BJ (cell line): ENCODE measurements at regions of chr12 and their contacts with region 1.

Region 1: DNA sequence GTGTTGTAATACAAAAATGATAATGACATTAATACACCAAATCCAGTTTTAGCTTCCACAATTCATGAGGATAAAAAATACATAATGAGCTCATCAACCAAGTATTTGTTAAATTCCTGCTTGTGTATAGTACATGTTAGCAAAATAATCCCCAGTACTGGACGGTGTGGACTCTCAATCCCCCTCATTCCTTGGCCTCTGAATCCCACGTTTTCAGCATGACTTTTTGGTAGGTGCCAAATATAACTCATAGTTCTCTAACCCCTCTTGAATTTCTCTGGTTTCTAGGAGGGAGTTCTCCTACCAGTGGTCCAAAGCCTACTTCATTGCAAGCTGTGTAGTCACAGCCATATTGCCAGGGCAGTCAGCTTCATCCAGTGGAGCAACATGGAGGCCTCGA is 41.4 kb upstream of the EPS8 start:
- DNase-seq: no peak
- H3K4me3 ChIP-seq: no peak overlapping the region
- H3K27me3 ChIP-seq: no peaks in the 10 kb centered on the region
- CTCF ChIP-seq: no peak

Region 2: DNA sequence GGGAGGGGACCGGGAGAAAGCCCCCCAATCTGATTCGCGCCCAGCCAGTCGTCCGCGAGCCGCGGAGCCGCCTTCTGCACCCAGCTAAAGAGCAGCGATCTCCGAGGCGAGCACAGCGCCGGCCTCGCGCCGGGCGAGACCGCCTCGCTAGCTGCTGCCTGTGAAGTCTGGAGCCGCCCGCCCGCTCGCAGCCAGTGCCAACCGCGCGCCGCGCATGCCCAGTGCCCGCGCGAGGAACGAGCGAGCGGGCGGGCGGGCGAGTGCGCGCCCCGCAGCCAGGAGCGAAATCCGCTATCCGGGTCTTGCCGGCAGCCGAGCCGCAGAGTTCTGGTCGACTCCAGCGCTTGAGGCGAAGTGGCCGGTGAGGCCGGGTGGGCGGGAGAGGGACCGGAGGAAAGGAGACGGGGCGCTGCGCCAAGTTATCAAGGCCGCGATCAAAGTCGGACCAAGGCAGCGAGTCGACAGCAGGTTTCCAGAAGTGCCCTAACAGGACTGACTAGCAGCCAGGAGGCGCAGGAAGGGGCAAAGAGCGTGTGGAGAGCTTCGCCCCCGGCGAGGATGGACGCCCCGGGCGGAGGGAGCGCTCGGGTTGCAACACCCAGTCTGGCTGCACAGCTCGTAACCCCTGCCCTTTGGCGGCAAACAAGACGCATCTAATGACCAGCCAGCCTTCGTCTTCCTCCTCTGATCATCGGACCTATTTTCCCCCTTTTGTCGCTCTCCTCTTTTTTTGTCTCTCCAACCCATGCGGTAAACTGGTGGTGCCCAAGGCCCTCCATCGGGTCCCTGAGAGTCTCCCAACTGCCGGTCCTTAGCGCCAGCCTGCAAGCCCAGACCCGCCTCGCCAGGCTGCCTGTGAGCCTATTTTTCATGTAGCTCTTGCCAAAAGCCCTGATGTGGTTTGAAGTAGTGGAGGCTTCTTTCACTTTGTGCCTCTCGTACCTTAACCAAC is 41.0 kb before region 1 on chr12 and contains the start of gene EPS8:
- CTCF ChIA-PET with region 1: no interaction called
- POLR2A ChIA-PET with region 1: interaction called, 11 read pairs
- DNase-seq: no peak
- H3K4me3 ChIP-seq: peak within 1 kb of the TSS; percentile 96
- H3K27me3 ChIP-seq: no peaks in the 10 kb centered on the region
- CTCF ChIP-seq: peak; percentile 18; the same call in 1 of the 2 replicates
- polyA plus RNA-seq, gene EPS8: 93.3 and 118 TPM in 2 replicates